ENCODE measurements at regions of chr11 and their contacts with region 1.

Region 1: GRCh38 chr11:128579798-128580504 is 7.4 kb downstream of the ETS1 start:
- DNase-seq: peak; percentile 27
- H3K4me3 Mint-ChIP-seq: peak overlapping the region; percentile 71
- H3K27ac Mint-ChIP-seq: peak overlapping the region; percentile 95
- H3K4me1 Mint-ChIP-seq: peaks cover 68% of the 10 kb centered on the region
- H3K27me3 Mint-ChIP-seq: no peaks in the 10 kb centered on the region

Region 2: DNA sequence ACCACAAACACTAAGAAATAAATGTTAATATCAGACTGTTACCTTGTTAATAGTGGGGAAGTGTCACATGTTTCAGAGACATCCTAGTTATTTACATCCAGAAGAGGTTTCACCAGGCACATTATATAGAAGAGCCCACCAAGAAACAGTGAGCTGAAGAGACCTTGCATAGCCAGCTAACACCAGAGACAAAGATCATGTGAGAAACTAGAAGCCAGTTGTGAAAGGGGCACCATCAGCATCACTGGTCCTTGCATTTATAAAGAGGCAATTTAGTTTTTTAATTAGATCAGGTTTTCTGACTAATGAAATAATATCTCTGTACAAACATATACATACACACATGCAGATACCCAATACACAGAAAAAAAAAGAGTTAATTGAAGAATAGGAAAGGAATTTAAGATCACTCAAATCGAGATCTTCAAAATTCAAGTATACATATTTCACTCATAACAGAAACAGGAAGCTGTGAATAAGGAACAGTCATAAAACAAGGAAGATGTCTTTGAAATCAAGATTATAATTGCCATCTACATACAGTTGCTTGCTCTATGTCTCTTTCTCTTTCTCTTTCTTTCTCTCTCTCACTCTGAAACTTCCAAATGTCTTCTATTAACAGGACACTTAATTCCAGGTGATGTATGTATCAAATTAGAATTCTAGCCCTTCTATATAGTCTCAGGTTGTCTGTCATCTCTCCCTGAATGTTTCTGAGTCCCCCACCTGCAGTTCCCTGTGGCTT is 341.3 kb before region 1 on chr11:
- CTCF ChIA-PET with region 1: no interaction called
- POLR2A ChIA-PET with region 1: no interaction called
- intact Hi-C with region 1: loop called (anchors 2 kb)
- DNase-seq: no peak
- H3K4me3 Mint-ChIP-seq: peak overlapping the region; percentile 45
- H3K27ac Mint-ChIP-seq: peak overlapping the region; percentile 75
- H3K4me1 Mint-ChIP-seq: peaks cover 27% of the 10 kb centered on the region
- H3K27me3 Mint-ChIP-seq: no peaks in the 10 kb centered on the region

Region 3: GRCh38 chr11:128552783-128553661 is 26.9 kb before region 1 on chr11:
- CTCF ChIA-PET with region 1: no interaction called
- POLR2A ChIA-PET with region 1: interaction called, 12 read pairs
- intact Hi-C with region 1: loop called (anchors 1 kb)
- DNase-seq: peak; percentile 72
- H3K4me3 Mint-ChIP-seq: peak overlapping the region; percentile 70
- H3K27ac Mint-ChIP-seq: peak overlapping the region; percentile 94
- H3K4me1 Mint-ChIP-seq: peaks cover 65% of the 10 kb centered on the region
- H3K27me3 Mint-ChIP-seq: no peaks in the 10 kb centered on the region

Region 4: DNA sequence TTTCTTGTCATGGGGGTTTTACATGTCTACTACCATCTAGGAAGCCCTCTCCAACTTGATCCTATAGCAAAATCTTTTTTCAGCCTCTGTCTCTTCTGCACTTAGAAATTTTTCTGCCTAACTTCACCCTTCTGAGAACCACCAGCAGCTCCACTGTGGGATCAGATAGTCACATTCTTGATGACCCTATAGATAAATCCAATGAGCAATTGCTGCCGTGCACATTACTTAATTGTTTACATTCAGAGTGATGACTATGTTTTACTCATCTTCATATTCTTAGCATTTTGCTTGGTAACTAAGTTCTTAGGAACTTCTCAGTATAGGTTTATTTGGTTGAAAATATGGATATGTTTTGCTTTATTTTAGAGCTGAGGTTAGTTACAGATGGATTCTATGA is 19.8 kb after region 1 on chr11:
- CTCF ChIA-PET with region 1: interaction called, 3 read pairs
- POLR2A ChIA-PET with region 1: interaction called, 11 read pairs
- intact Hi-C with region 1: loop called (anchors 1 kb)
- DNase-seq: peak; percentile 42
- H3K4me3 Mint-ChIP-seq: no peak overlapping the region
- H3K27ac Mint-ChIP-seq: peak overlapping the region; percentile 53
- H3K4me1 Mint-ChIP-seq: peaks cover 49% of the 10 kb centered on the region
- H3K27me3 Mint-ChIP-seq: no peaks in the 10 kb centered on the region

Region 5: GRCh38 chr11:128624269-128625175 is 44.6 kb after region 1 on chr11:
- CTCF ChIA-PET with region 1: interaction called, 4 read pairs
- POLR2A ChIA-PET with region 1: interaction called, 19 read pairs
- intact Hi-C with region 1: loop called (anchors 2 kb)
- DNase-seq: peak; percentile 83
- H3K4me3 Mint-ChIP-seq: peak overlapping the region; percentile 57
- H3K27ac Mint-ChIP-seq: peak overlapping the region; percentile 94
- H3K4me1 Mint-ChIP-seq: peaks cover 95% of the 10 kb centered on the region
- H3K27me3 Mint-ChIP-seq: no peaks in the 10 kb centered on the region

Region 6: GRCh38 chr11:128695539-128696221 is 115.7 kb after region 1 on chr11:
- CTCF ChIA-PET with region 1: no interaction called
- POLR2A ChIA-PET with region 1: interaction called, 3 read pairs
- intact Hi-C with region 1: loop called (anchors 2 kb)
- DNase-seq: peak; percentile 55
- H3K4me3 Mint-ChIP-seq: peak overlapping the region; percentile 78
- H3K27ac Mint-ChIP-seq: peak overlapping the region; percentile 89
- H3K4me1 Mint-ChIP-seq: peaks cover 57% of the 10 kb centered on the region
- H3K27me3 Mint-ChIP-seq: peaks cover 5% of the 10 kb centered on the region